ENCODE measurements at regions of chr12 and their contacts with region 1.

Region 1: DNA sequence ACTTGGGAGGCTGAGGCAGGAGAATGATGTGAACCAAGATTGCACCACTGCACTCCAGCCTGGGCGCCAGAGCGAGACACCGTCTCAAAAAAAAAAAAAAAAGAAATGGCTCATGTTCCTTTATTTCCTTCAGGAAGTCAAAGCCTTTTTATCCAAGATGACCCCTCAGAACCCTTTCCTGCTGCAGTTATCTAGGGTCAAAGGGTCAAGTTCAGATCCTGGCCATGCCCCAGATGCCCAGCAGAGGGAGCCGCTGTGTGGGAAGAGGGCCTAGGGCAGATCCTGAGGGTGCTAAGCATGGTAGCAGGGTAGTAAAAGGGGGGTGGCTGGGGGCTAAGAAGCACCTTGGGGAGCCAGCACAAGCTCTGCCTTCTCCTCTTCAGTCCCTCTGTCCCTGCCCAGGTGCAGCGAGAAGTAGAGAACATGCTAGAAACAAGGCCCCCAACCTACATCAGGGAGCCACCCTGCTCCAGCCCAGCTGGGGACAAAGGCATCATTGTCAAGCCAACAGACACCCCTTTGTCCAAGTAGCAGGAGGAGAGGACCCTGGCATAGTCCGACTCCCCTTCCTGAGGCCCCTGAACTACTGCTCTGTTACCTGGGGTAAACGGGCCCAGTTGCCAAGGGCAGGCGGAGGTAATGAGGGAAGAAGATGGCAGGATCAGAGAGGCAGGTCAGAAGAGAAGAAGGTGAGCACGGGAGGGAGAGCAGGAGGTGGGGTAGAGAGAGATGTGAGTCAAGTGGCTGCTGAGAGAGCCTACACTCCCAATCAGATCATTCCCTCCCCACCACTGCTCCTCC is 6.5 kb downstream of the NFE2 start:
- DNase-seq: peak; percentile 75
- H3K4me3 Mint-ChIP-seq: no peak overlapping the region
- H3K27ac Mint-ChIP-seq: no peak overlapping the region
- H3K4me1 Mint-ChIP-seq: peaks cover 12% of the 10 kb centered on the region
- H3K27me3 Mint-ChIP-seq: peaks cover 18% of the 10 kb centered on the region

Region 2: DNA sequence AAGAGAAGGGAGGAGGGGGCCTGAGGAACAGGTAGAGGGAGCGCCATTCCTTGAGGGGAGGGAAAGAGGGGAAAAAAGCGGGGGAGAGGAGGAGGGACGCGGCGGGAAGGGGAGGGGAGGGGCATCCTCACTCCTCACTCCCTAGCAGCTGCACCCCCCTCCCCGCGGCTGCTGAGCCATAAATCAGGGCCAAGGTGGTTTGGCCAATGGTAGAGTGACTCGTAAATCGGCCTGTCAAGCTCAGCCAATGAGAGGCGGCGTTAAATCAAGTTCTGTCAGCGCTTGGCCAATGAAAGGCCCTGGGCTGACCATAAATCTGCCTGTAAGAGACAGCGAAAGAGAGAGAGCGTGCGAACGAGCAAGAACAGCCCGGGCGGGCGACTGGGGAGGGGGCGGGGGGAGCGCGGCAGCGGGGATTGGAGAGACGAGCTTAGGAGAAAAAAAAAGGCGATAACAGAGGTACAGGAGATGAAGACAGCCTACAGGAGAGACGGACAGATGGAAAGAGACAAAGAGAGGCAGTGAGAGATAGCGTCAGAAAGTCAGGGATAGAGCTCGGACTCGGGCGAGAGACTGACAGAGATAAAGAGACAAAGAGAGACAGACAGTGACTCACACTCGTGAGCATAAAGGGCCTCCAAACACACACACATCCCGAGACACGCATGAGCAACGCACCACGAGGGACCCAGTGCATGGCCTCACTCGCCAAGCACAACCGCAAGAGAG is 64.8 kb after region 1 on chr12:
- CTCF ChIA-PET with region 1: interaction called, 64 read pairs
- POLR2A ChIA-PET with region 1: interaction called, 7 read pairs
- DNase-seq: peak; percentile 97
- H3K4me3 Mint-ChIP-seq: no peak overlapping the region
- H3K27ac Mint-ChIP-seq: no peak overlapping the region
- H3K4me1 Mint-ChIP-seq: peaks cover 23% of the 10 kb centered on the region
- H3K27me3 Mint-ChIP-seq: no peaks in the 10 kb centered on the region

Region 3: GRCh38 chr12:54368709-54369583 is 74.6 kb after region 1 on chr12:
- CTCF ChIA-PET with region 1: interaction called, 64 read pairs
- POLR2A ChIA-PET with region 1: interaction called, 4 read pairs
- DNase-seq: peak; percentile 90
- H3K4me3 Mint-ChIP-seq: no peak overlapping the region
- H3K27ac Mint-ChIP-seq: no peak overlapping the region
- H3K4me1 Mint-ChIP-seq: peaks cover 54% of the 10 kb centered on the region
- H3K27me3 Mint-ChIP-seq: peaks cover 16% of the 10 kb centered on the region

Region 4: DNA sequence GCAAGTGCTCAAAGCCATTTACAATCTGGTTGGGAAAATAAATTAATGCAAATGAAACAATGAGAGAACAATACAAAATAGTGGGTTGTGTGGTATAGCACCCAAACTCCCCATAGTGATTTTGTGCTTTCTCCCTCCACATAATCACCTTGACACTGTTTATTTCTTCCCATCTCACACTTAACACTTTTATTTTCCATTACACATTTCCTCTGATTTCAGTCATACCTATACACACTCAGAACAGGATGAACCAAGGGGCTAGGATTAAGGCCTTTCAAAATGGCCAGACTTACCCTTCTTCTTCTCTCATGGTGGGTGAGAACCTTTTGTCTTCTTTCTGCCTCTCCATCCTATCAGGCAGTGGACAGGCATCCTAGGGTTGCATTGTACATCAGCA is 241.1 kb after region 1 on chr12:
- CTCF ChIA-PET with region 1: no interaction called
- POLR2A ChIA-PET with region 1: no interaction called
- DNase-seq: no peak
- H3K4me3 Mint-ChIP-seq: no peak overlapping the region
- H3K27ac Mint-ChIP-seq: no peak overlapping the region
- H3K4me1 Mint-ChIP-seq: no peaks in the 10 kb centered on the region
- H3K27me3 Mint-ChIP-seq: no peaks in the 10 kb centered on the region

Measured in activated CD4-positive, alpha-beta memory T cell treated with anti-CD3 and anti-CD28 coated beads, Interleukin-2, amount 10 ng/mL, durations not matched to agents 7 days and 5 days (primary cell).